ENCODE measurements at regions of chr10 and their contacts with region 1.

Region 1: DNA sequence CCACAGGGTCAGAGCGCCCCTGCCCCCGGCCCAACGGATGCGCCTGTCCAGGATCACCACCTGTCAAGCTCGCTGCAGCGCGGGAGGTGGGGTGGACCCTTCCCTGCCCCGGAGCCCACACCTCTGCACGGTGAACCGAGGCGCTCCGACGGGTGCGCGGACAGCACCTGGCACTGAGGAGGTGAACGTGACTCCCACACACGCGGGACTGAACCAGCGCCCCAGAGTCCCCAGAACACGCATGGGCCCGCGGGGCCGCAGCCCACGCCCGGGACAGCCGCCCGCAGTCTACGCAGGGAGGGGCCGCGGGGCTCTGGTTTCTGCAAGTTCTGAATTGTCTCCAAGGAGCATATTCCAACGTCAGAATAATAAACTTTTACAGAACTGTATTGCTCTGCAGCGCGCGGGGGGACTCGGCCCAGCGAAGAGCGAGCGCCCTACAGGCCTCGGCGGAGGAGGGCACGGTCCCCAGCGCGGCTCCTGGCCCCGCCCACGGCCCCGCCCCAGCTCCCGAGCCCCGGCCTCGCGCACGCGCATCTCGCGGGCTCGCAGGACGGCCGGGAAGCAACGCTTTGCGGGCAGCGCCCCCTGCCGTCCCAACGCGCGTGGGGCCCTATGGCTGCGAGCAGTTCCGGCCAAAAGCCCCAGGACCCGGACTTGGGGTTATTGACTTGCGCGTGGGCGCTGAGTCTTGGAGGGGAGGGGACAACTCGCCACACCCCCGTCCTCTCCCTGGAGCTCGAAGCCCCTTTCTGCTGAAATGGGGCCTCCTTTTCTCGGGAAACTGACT is 29.7 kb downstream of the OAT start:
- DNase-seq: peak; percentile 92
- ATAC-seq: peak; percentile 98
- H3K4me3 Mint-ChIP-seq: peak overlapping the region; percentile 31
- H3K27ac Mint-ChIP-seq: no peak overlapping the region
- H3K4me1 Mint-ChIP-seq: peaks cover 2% of the 10 kb centered on the region
- H3K27me3 Mint-ChIP-seq: peaks cover 5% of the 10 kb centered on the region

Region 2: GRCh38 chr10:124176349-124177176 is 212.5 kb before region 1 on chr10:
- CTCF ChIA-PET with region 1: interaction called, 12 read pairs
- POLR2A ChIA-PET with region 1: no interaction called
- DNase-seq: no peak
- ATAC-seq: no peak
- H3K4me3 Mint-ChIP-seq: no peak overlapping the region
- H3K27ac Mint-ChIP-seq: no peak overlapping the region
- H3K4me1 Mint-ChIP-seq: peaks cover 17% of the 10 kb centered on the region
- H3K27me3 Mint-ChIP-seq: peaks cover 2% of the 10 kb centered on the region

Region 3: DNA sequence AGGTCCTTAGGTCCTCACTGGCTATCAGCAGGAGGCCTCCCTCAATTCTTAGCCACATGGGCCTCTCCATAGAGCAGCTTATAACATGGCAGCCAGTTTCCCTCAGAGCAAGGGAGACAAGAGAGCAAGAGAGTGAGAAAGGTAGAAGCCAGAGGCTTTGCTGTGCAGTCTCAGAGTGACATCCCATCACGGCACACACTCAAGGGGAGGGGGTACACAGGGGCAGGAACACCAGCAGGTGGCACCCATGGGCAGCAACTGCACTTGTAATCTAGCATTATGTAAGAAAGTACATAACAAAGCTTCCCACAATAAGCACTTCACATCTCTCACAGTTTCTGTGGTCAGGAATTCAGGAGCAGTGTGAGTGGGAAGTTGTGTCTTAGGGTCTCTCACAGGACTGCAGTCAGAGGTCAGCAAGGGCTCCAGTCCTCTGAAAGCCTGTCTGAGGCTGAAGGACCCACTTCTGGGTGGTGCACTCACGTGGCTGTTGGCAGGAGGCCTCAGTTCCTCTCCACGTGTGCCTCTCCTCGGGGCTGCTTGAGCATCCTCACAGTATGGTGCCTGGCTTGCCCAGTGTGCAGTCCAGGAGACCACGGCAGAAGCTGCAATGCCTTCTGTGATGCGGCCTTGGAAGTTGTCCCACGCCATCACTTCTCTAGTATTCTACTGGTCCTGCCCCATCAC is 129.7 kb before region 1 on chr10:
- CTCF ChIA-PET with region 1: interaction called, 24 read pairs
- POLR2A ChIA-PET with region 1: no interaction called
- DNase-seq: peak; percentile 23
- ATAC-seq: no peak
- H3K4me3 Mint-ChIP-seq: no peak overlapping the region
- H3K27ac Mint-ChIP-seq: no peak overlapping the region
- H3K4me1 Mint-ChIP-seq: no peaks in the 10 kb centered on the region
- H3K27me3 Mint-ChIP-seq: no peaks in the 10 kb centered on the region

Region 4: GRCh38 chr10:124403548-124403947 is 14.5 kb after region 1 on chr10:
- CTCF ChIA-PET with region 1: interaction called, 51 read pairs
- POLR2A ChIA-PET with region 1: no interaction called
- DNase-seq: peak; percentile 58
- ATAC-seq: peak; percentile 97
- H3K4me3 Mint-ChIP-seq: no peak overlapping the region
- H3K27ac Mint-ChIP-seq: peak overlapping the region; percentile 70
- H3K4me1 Mint-ChIP-seq: peaks cover 10% of the 10 kb centered on the region
- H3K27me3 Mint-ChIP-seq: no peaks in the 10 kb centered on the region

Region 5: GRCh38 chr10:124493214-124493882 is 104.3 kb after region 1 on chr10:
- CTCF ChIA-PET with region 1: no interaction called
- POLR2A ChIA-PET with region 1: no interaction called
- DNase-seq: no peak
- ATAC-seq: no peak
- H3K4me3 Mint-ChIP-seq: no peak overlapping the region
- H3K27ac Mint-ChIP-seq: no peak overlapping the region
- H3K4me1 Mint-ChIP-seq: peaks cover 15% of the 10 kb centered on the region
- H3K27me3 Mint-ChIP-seq: no peaks in the 10 kb centered on the region

Measured in activated CD8-positive, alpha-beta T cell treated with anti-CD3 and anti-CD28 coated beads, Interleukin-2, amount 10 ng/mL, durations not matched to agents 7 days and 5 days (primary cell).